ENCODE measurements at regions of chr12 and their contacts with region 1.

Region 1: DNA sequence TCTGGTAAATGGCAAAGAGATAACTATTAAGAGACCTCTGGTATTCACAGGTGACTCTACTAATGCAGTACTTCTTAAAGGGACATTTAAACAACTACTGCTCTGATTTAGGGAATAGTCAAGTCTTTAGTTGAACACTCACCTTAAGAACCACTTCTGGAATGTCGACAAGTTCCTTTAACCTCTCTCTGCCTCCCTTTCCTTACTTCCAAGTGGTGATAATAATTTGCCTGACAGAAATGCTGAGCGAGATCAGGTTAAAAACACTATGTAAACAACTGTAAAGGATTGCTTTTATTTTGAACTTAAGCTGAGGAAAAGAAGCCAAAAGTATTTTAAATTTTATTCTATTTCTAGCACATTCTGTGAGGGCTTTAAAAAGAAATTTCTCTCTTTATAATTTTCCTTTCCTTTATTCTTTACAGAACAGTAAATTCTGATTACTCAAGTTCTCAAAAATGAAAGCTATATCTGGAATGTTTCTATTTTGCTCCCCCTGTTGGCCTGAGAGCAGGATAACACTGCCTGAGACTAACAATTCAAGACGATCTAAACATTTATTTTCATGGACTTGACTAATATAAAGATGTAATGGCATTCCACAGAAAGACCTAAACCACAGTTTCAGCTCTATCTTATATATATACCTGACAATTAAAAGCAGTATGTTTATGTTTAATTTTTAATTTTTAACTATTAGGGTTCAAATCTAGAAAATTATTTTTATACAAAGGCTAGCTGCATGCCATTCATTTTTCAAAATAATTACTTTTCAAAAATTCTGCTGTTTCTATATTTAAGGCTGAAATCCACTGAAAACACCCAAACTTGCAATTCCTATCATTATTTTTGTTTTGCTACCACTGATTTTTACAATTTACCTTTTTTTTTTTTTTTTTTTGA is 29.2 kb downstream of the ZCCHC8 start:
- DNase-seq: peak; percentile 76
- H3K4me3 Mint-ChIP-seq: no peak overlapping the region
- H3K27ac Mint-ChIP-seq: no peak overlapping the region
- H3K4me1 Mint-ChIP-seq: peaks cover 16% of the 10 kb centered on the region
- H3K27me3 Mint-ChIP-seq: no peaks in the 10 kb centered on the region

Region 2: GRCh38 chr12:122399592-122400373 is 71.8 kb before region 1 on chr12:
- intact Hi-C with region 1: loop called (anchors 1 kb)
- DNase-seq: peak; percentile 86
- H3K4me3 Mint-ChIP-seq: peak overlapping the region; percentile 71
- H3K27ac Mint-ChIP-seq: peak overlapping the region; percentile 87
- H3K4me1 Mint-ChIP-seq: peaks cover 34% of the 10 kb centered on the region
- H3K27me3 Mint-ChIP-seq: no peaks in the 10 kb centered on the region

Region 3: GRCh38 chr12:122486805-122487426 is 15.3 kb after region 1 on chr12:
- intact Hi-C with region 1: no loop called
- DNase-seq: no peak
- H3K4me3 Mint-ChIP-seq: no peak overlapping the region
- H3K27ac Mint-ChIP-seq: peak overlapping the region; percentile 0
- H3K4me1 Mint-ChIP-seq: peaks cover 9% of the 10 kb centered on the region
- H3K27me3 Mint-ChIP-seq: no peaks in the 10 kb centered on the region

Measured in activated CD4-positive, alpha-beta T cell treated with anti-CD3 and anti-CD28 coated beads, Interleukin-2, amount 10 ng/mL, durations not matched to agents 24 days and 14 days (primary cell).